ENCODE measurements at regions of chr12 and their contacts with region 1.

Region 1: GRCh38 chr12:66235626-66236281 is 46.7 kb downstream of the IRAK3 start:
- DNase-seq: no peak
- H3K4me3 ChIP-seq: peak overlapping the region; percentile 39 to 80 (median 75)
- H3K4me3 Mint-ChIP-seq: peak overlapping the region; percentile 72 to 84
- H3K27ac ChIP-seq: peak overlapping the region; percentile 60
- H3K27ac Mint-ChIP-seq: peak overlapping the region; percentile 88 to 96 (median 92)
- H3K4me1 ChIP-seq: peaks cover 62 to 67% of the 10 kb centered on the region in 2 donors
- H3K4me1 Mint-ChIP-seq: peaks cover 63% of the 10 kb centered on the region
- H3K27me3 ChIP-seq: no peaks in the 10 kb centered on the region
- H3K27me3 Mint-ChIP-seq: peaks cover 0 to 2% (median 0%) of the 10 kb centered on the region in 3 donors
- CTCF ChIP-seq: peak; percentile 59

Region 2: GRCh38 chr12:66190519-66191370 is 45.0 kb before region 1 on chr12:
- intact Hi-C with region 1: loop called in 1 of 2 experiments (anchors 5 kb)
- DNase-seq: peak; percentile 66 to 82 (median 81)
- H3K4me3 ChIP-seq: peak overlapping the region; percentile 86 to 96 (median 94)
- H3K4me3 Mint-ChIP-seq: peak overlapping the region; percentile 85 to 97
- H3K27ac ChIP-seq: peak overlapping the region; percentile 77 to 98
- H3K27ac Mint-ChIP-seq: peak overlapping the region; percentile 95 to 100 (median 99)
- H3K4me1 ChIP-seq: peaks cover 81 to 82% of the 10 kb centered on the region in 2 donors
- H3K4me1 Mint-ChIP-seq: peaks cover 72% of the 10 kb centered on the region
- H3K27me3 ChIP-seq: no peaks in the 10 kb centered on the region
- H3K27me3 Mint-ChIP-seq: no peaks in the 10 kb centered on the region
- CTCF ChIP-seq: no peak

Region 3: DNA sequence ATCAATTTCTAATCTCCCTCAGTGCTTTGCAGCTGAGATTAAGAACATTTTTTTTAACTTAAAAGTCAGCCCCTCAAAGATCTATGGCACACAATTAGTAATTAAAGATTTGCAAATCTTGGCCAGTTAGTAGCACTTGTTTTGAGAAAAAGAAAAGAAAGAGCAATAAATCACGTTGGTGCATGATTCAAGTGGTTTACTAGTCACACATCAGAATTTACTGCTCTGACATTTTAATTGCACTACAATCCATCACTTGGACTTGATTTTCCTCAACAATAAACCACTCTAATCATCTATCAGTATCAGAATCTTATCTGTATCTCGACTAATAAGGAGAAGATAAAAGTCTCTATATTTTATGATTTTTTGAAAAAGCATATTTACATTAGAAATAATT is 220.9 kb after region 1 on chr12:
- intact Hi-C with region 1: no loop called
- DNase-seq: no peak
- H3K4me3 ChIP-seq: no peak overlapping the region
- H3K4me3 Mint-ChIP-seq: no peak overlapping the region
- H3K27ac ChIP-seq: no peak overlapping the region
- H3K27ac Mint-ChIP-seq: no peak overlapping the region
- H3K4me1 ChIP-seq: peaks cover 5 to 10% of the 10 kb centered on the region in 2 donors
- H3K4me1 Mint-ChIP-seq: peaks cover 12% of the 10 kb centered on the region
- H3K27me3 ChIP-seq: no peaks in the 10 kb centered on the region
- H3K27me3 Mint-ChIP-seq: peaks cover 0 to 3% (median 0%) of the 10 kb centered on the region in 3 donors
- CTCF ChIP-seq: no peak

Measured in CD14-positive monocyte (primary cell).